ENCODE measurements at regions of chr4 and their contacts with region 1.

Region 1: DNA sequence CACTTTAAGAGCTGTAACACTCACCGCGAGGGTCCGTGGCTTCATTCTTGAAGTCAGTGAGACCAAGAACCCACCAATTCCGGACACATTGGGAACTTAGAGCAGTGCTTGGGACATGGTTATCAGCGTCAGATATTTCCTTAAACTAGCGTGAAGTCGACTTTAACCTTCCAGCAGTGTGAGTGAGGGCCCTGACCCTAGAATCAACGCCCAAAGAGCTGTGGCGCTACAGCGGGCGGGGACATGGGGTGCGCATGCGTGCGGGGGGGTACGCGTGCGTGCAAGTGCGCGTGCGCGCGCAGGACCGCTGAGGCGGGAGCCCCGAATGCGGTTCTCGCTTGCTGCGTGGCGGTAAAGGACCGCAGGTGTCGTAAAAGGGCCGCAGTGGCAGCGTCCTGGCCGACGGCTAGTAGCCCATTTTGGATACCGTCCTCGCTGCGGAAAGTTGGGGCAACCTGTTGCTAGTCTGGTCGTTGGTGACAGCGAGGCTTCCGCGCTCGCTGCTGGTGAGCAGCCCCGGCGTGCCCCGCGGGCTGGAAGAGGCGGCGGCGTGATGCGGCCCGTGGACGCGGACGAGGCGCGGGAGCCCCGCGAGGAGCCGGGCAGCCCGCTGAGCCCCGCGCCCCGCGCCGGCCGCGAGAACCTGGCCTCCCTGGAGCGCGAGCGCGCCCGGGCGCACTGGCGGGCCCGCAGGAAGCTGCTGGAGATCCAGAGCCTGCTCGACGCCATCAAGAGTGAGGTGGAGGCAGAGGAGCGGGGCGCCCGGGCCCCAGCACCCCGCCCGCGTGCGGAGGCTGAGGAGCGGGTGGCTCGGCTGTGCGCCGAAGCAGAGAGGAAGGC is 19.8 kb upstream of the S100P start:
- H3K4me3 Mint-ChIP-seq: peak overlapping the region; percentile 92
- H3K27ac Mint-ChIP-seq: peak overlapping the region; percentile 97
- H3K4me1 Mint-ChIP-seq: peaks cover 45% of the 10 kb centered on the region
- H3K27me3 Mint-ChIP-seq: no peaks in the 10 kb centered on the region

Region 2: GRCh38 chr4:6343950-6344408 is 329.9 kb before region 1 on chr4:
- intact Hi-C with region 1: no loop called
- H3K4me3 Mint-ChIP-seq: no peak overlapping the region
- H3K27ac Mint-ChIP-seq: no peak overlapping the region
- H3K4me1 Mint-ChIP-seq: no peaks in the 10 kb centered on the region
- H3K27me3 Mint-ChIP-seq: peaks cover 10% of the 10 kb centered on the region

Region 3: DNA sequence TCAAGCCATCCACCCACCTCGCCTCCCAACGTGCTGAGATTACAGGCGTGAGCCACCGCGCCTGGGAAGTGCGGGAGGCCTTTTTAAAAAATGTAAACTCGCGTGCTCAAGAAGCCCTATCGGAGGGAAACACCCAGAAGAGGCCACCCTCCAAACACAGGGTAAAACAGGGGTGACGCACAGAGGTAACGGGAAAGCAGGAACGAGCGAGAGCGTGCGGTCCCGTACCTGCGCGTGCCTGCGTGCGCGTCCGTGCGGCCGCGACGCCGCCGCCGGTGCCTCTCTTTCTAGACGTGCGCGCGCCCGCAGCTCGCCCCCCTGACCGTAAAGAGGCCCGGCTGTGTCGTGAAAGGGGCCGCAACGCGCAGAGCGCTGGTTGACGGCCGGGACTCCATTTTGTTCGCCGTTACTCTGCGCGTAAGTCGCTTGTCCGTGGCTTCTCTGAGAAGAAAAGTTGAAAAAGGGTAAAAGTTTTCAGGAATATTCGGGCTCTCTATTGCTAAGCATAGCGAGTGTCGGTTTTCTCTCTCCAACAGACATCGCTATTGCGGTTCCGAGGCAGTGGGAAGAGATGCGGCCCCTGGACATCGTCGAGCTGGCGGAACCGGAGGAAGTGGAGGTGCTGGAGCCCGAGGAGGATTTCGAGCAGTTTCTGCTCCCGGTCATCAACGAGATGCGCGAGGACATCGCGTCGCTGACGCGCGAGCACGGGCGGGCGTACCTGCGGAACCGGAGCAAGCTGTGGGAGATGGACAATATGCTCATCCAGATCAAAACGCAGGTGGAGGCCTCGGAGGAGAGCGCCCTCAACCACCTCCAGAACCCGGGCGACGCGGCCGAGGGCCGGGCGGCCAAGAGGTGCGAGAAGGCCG is 33.4 kb before region 1 on chr4 and contains the start of gene MRFAP1:
- intact Hi-C with region 1: loop called (anchors 1 kb)
- H3K4me3 Mint-ChIP-seq: peak within 1 kb of the TSS; percentile 98
- H3K27ac Mint-ChIP-seq: peak within 1 kb of the TSS; percentile 97
- H3K4me1 Mint-ChIP-seq: peaks cover 36% of the 10 kb centered on the region
- H3K27me3 Mint-ChIP-seq: no peaks in the 10 kb centered on the region

Region 4: DNA sequence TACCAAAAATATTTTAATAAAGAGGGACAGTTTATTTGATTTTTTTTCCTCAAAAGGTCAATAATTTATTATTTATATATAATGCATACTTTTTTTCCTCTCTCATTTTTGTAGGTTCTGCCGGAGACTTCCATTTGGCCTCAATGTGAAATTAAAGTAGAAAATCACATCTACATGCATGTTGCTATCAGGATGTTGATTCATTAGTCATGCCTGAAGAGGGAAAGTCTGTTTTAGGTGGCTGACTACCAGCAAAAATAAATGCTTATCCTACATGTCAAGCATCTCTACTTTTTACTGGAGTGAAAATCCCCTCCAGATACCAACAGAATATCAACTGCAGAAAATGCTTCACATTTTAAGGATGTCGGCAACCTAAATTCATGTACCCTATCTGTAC is 150.2 kb after region 1 on chr4:
- intact Hi-C with region 1: no loop called
- H3K4me3 Mint-ChIP-seq: no peak overlapping the region
- H3K27ac Mint-ChIP-seq: no peak overlapping the region
- H3K4me1 Mint-ChIP-seq: peaks cover 6% of the 10 kb centered on the region
- H3K27me3 Mint-ChIP-seq: no peaks in the 10 kb centered on the region